ENCODE measurements at regions of chr16 and their contacts with region 1.

Region 1: GRCh38 chr16:49921791-49922456 is 66.0 kb upstream of the ZNF423 start:
- DNase-seq: peak; percentile 40 to 60
- ATAC-seq: peak; percentile 67 to 83 (median 77)
- H3K4me3 ChIP-seq: no peak overlapping the region
- H3K27ac ChIP-seq: no peak overlapping the region
- H3K4me1 ChIP-seq: no peaks in the 10 kb centered on the region
- H3K27me3 ChIP-seq: no peaks in the 10 kb centered on the region
- CTCF ChIP-seq: peak; percentile 59

Region 2: DNA sequence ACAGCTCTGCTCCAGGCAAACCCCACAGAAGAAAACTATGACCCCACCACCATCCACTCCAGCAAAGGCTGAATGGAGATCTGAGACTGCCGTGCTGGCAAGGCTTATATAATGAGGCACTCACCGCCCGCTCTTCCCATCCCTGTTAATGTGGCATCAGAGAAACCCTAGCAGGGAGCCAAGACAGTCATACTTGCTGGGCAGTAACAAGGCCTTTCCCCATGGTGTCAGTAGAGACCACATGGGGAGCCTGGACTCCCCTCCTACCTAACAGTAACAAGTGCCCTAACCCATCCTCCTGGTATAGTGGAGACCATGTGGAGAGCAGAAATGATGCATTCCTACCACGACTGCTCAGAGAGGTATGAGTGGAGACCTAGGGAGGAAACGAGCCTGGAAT is 313.1 kb before region 1 on chr16:
- intact Hi-C with region 1: loop called in 1 of 2 experiments (anchors 10 kb)
- DNase-seq: peak in 1 of 2 donors; percentile 56
- ATAC-seq: peak; percentile 78 to 99 (median 93)
- H3K4me3 ChIP-seq: no peak overlapping the region
- H3K27ac ChIP-seq: no peak overlapping the region
- H3K4me1 ChIP-seq: peaks cover 7% of the 10 kb centered on the region
- H3K27me3 ChIP-seq: no peaks in the 10 kb centered on the region
- CTCF ChIP-seq: peak; percentile 51

Region 3: GRCh38 chr16:49800876-49801275 is 121.0 kb before region 1 on chr16:
- intact Hi-C with region 1: no loop called
- DNase-seq: no peak
- ATAC-seq: no peak
- H3K4me3 ChIP-seq: no peak overlapping the region
- H3K27ac ChIP-seq: no peak overlapping the region
- H3K4me1 ChIP-seq: peaks cover 16% of the 10 kb centered on the region
- H3K27me3 ChIP-seq: no peaks in the 10 kb centered on the region
- CTCF ChIP-seq: no peak

Measured in psoas muscle (tissue), 8 donors.